ENCODE measurements at regions of chr7 and their contacts with region 1.

Region 1: DNA sequence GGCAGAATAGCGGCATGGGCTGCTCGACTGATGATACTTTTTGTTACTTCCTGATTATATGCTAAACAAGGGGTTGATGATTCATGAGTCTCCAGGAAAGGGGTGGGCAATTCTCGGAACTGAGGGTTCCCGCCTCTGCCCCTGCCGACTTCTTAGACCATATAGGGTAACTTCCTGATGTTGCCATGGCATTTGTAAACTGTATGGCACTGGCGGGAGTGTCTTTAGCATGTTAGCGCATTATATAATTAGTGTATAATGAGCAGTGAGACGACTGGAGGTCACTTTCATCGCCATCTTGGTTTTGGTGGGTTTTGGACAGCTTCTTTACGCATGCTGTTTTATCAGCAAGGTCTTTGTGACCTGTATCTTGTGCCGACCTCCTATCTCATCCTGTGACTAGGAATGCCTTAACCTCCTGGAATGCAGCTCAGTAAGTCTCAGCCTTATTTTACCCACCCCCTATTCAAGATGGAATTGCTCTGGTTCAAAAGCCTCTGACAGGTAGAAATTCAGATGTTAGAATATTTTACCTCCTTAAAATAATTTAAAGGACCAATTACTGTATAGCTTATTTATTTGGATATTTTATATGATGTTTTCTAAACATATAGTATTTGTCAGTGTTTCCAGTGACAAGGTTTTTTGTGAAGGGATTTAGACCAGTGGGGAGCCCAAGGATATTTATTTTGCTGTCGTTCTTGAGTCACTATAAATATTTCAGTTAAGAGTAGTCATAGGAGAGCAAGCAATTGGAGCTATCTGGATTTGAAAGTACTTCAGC is 90.1 kb upstream of the PIK3CG start:
- DNase-seq: no peak
- H3K4me3 Mint-ChIP-seq: no peak overlapping the region
- H3K27ac Mint-ChIP-seq: peak overlapping the region; percentile 45
- H3K4me1 Mint-ChIP-seq: peaks cover 28% of the 10 kb centered on the region
- H3K27me3 Mint-ChIP-seq: no peaks in the 10 kb centered on the region

Region 2: GRCh38 chr7:106717955-106718871 is 56.7 kb before region 1 on chr7:
- intact Hi-C with region 1: loop called (anchors 1 kb)
- DNase-seq: peak; percentile 85
- H3K4me3 Mint-ChIP-seq: no peak overlapping the region
- H3K27ac Mint-ChIP-seq: no peak overlapping the region
- H3K4me1 Mint-ChIP-seq: peaks cover 22% of the 10 kb centered on the region
- H3K27me3 Mint-ChIP-seq: no peaks in the 10 kb centered on the region

Measured in activated CD4-positive, alpha-beta T cell treated with anti-CD3 and anti-CD28 coated beads, Interleukin-2, amount 10 ng/mL, durations not matched to agents 24 days and 14 days (primary cell).